Gastrocnemius medialis (tissue), 4 donors: ENCODE measurements at regions of chr12 and their contacts with region 1.

Region 1: DNA sequence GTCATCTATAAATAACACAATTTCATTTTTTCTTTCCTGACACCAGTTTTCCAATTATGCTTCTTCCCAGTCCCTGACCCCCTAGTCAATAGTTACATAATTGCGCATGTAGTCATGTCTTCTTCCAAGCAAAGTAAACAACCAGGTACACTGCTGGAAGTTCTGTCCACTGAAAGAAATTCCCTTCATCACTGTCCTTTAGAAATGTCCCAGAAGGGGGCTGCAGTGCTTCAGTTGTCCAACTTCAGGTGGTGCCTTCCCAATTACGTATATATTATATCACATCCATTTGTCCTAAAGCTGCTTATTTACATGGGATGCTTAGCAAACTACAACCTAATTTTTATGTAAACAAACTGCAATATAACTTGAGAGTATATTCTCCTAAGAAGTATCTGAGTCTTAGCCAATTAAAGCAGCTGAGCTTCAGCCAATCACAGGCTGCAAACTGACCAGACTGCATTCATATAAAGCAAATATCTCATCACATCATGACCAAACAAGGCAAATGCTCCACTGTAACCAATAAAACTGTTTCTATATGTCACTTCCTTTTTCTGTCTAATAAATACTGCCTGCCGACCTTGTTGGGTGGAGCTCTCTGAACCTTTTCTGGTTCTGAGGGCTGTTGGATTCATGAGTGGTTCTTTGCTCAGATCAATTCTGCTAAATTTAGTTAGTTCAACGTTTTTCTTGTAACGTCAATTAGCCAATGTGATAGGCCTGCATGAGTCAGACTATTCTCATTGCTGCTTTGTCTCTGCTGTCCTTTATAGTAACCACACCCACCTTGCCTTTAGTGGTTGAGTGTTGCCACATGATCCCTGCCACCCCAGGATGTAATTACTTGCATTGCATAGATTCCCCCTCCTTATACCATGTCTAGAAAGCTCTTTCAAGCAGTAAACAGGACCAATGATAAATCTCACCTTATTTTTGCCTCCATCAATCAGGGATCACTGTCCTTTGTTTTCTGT is 239.3 kb downstream of the ALG10B start:
- DNase-seq: no peak
- ATAC-seq: no peak
- H3K4me3 ChIP-seq: no peak overlapping the region
- H3K27ac ChIP-seq: no peak overlapping the region
- H3K4me1 ChIP-seq: no peaks in the 10 kb centered on the region
- H3K27me3 ChIP-seq: no peaks in the 10 kb centered on the region
- CTCF ChIP-seq: no peak
- POLR2A ChIP-seq: no peak

Region 2: DNA sequence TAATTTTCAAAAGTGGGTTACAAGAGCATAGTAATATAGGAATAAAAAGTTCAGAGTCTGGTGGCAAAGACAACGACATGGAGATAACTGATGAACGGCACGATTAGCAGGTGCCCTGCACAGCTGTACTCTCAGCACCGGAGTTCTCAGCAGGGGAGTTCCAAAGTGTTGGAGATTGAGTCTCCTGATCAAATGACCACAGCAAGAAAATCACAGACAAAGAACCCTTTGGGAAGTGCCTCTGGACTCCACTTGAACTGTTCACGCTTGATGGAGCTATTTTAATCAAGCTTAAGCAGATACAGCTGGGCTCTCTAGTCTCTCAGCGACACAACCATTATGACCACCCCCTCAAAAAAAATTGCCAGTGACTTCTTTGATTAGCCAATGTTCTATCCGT is 86.2 kb before region 1 on chr12:
- in situ Hi-C with region 1: loop called in 1 of 4 experiments (anchors 25 kb)
- intact Hi-C with region 1: no loop called
- DNase-seq: no peak
- ATAC-seq: no peak
- H3K4me3 ChIP-seq: no peak overlapping the region
- H3K27ac ChIP-seq: no peak overlapping the region
- H3K4me1 ChIP-seq: no peaks in the 10 kb centered on the region
- H3K27me3 ChIP-seq: no peaks in the 10 kb centered on the region
- CTCF ChIP-seq: no peak
- POLR2A ChIP-seq: no peak